Aorta (tissue), 5 donors: ENCODE measurements at regions of chr6 and their contacts with region 1.

Region 1: DNA sequence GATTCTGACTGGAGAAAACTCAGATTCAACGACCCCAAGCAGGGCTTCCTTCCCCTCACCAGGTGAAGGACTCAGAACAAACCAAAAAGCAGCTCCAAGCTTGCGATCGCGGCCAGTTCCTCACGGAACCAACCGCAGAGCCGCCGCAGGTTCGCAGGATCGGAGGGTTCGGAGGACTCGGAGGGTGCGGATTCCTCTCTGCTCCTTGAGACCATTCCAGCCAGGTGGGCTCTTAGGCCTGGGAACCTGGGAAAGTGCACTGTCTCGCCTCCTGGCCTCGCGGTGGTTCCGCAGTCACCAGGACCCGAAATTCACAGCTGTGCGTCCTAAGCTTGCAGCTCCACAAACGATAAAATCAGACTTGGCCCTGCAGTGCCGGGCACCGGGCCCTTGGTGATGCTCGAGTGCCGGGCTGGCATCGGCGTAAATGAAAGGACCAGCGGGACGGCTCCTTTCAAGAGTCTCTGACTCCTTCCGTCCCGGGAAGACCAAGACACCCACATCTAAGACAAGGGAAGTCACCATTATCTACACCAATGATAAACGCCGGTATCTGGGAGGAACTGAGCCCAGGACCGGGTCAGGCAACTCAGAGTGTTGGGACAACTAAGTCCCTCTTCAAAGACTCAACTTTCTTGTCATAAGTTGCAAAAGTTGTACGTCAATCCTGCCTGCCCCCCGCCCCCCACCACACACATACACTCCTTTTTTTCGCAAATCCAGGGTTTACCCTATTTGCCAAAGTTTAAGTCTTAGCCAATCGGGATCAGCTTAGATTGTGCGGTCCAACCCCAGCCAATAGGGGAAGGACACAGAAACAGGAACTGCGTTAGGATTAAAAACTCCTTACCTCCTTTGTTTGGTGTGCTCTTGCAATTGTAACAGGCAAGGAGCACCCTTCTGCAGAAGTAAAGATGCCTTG is 69.8 kb upstream of the PRSS16 start:
- DNase-seq: peak; percentile 88 to 92
- ATAC-seq: peak; percentile 92
- H3K4me3 ChIP-seq: peak overlapping the region; percentile 91 to 98
- H3K27ac ChIP-seq: peak overlapping the region in 1 of 2 donors; percentile 83
- H3K4me1 ChIP-seq: no peaks in the 10 kb centered on the region
- H3K27me3 ChIP-seq: no peaks in the 10 kb centered on the region

Region 2: DNA sequence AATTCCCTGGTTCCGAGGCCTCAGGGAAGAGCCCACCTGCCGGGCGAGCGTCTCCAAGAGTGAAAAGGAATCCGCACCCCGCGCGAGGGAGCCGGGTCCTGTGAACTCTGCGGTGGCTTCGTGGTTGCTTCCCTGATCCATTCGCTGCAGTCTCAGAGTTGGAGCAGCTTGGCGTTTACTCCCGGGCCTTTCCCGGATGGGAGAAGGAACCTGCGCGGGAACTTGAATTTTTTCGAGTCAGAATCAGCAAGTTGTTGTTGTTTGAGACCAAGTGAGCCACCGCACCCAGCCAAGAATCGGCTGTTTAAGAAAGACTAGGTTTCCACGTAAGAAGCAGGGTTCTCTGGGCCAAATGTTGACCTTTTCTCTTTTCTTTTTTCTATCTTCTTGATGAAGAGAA is 82.6 kb after region 1 on chr6:
- intact Hi-C with region 1: no loop called
- DNase-seq: no peak
- ATAC-seq: no peak
- H3K4me3 ChIP-seq: no peak overlapping the region
- H3K27ac ChIP-seq: no peak overlapping the region
- H3K4me1 ChIP-seq: no peaks in the 10 kb centered on the region
- H3K27me3 ChIP-seq: peaks cover 0 to 7% of the 10 kb centered on the region in 2 donors

Region 3: DNA sequence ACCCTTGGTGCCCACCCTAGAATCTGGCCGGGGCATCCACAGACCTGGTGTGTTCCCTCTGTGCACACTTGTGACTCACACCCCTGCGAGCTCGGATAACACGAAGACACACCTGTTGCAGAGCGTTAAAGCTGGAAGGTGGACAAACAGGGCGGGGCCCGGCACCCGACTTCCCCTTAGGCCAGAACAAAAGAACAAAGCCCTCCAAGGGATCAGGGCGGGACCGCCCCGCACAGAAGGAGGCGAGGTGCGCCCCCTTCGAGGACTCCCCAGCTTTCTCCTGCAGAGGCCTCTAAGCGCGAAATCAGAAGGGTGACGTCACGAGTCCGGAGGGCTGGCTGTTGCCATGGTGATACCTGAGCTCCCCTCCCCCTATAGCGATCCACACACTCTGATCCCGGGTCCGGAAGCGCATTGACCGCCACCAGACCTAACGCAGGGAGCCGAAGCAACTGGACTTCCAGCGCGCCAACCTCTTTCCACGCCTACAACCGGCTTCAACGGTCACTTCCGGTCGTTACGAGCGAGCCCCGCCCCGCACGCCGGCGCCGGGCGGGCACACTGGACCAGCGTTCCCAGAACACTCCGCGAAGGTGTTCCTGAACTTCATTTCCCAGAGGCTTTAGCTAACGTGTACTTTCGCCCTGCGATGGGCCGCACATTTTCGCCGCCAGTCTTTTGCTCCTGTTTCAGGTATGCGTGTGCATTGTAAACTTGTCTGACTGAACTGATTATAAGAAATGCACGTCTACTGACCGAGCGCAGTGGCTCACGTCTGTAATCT is 295.1 kb after region 1 on chr6 and contains the start of gene ZNF184:
- intact Hi-C with region 1: loop called (anchors 5 to 10 kb)
- DNase-seq: peak; percentile 97 to 98
- ATAC-seq: peak; percentile 99
- H3K4me3 ChIP-seq: peak within 1 kb of the TSS; percentile 49 to 66
- H3K27ac ChIP-seq: peak within 1 kb of the TSS in 1 of 2 donors; percentile 7
- H3K4me1 ChIP-seq: no peaks in the 10 kb centered on the region
- H3K27me3 ChIP-seq: no peaks in the 10 kb centered on the region
- total RNA-seq, gene ZNF184: 5.3 to 8.0 TPM

Region 4: GRCh38 chr6:27479319-27480182 is 301.8 kb after region 1 on chr6:
- intact Hi-C with region 1: loop called (anchors 5 to 10 kb)
- DNase-seq: peak; percentile 77 to 92
- ATAC-seq: peak; percentile 96
- H3K4me3 ChIP-seq: peak overlapping the region; percentile 93 to 100
- H3K27ac ChIP-seq: peak overlapping the region; percentile 92 to 100
- H3K4me1 ChIP-seq: no peaks in the 10 kb centered on the region
- H3K27me3 ChIP-seq: no peaks in the 10 kb centered on the region